Body of pancreas (tissue), 4 donors: ENCODE measurements at regions of chr11 and their contacts with region 1.

Region 1: GRCh38 chr11:123570939-123571580 is 83.4 kb downstream of the SCN3B start:
- DNase-seq: no peak
- ATAC-seq: no peak
- H3K4me3 ChIP-seq: no peak overlapping the region
- H3K27ac ChIP-seq: no peak overlapping the region
- H3K4me1 ChIP-seq: no peaks in the 10 kb centered on the region
- H3K27me3 ChIP-seq: no peaks in the 10 kb centered on the region
- CTCF ChIP-seq: no peak
- POLR2A ChIP-seq: no peak

Region 2: GRCh38 chr11:123511037-123511870 is 59.8 kb before region 1 on chr11:
- intact Hi-C with region 1: loop called (anchors 5 kb)
- DNase-seq: peak; percentile 80 to 86 (median 82)
- ATAC-seq: peak; percentile 82
- H3K4me3 ChIP-seq: no peak overlapping the region
- H3K27ac ChIP-seq: no peak overlapping the region
- H3K4me1 ChIP-seq: no peaks in the 10 kb centered on the region
- H3K27me3 ChIP-seq: peaks cover 0 to 7% of the 10 kb centered on the region in 2 donors
- CTCF ChIP-seq: peak; percentile 63 to 88 (median 75)
- POLR2A ChIP-seq: no peak